Common myeloid progenitor, CD34-positive (primary cell): ENCODE measurements at regions of chr7 and their contacts with region 1.

Region 1: GRCh38 chr7:30800785-30801252 is 29.6 kb downstream of the MINDY4 start:
- DNase-seq: peak; percentile 48 to 80 (median 75)
- H3K4me3 ChIP-seq: no peak overlapping the region
- H3K27ac ChIP-seq: no peak overlapping the region
- H3K4me1 ChIP-seq: peaks cover 0 to 13% (median 7%) of the 10 kb centered on the region in 4 experiments
- H3K27me3 ChIP-seq: no peaks in the 10 kb centered on the region

Region 2: GRCh38 chr7:30977896-30978564 is 177.2 kb after region 1 on chr7:
- CTCF ChIA-PET with region 1: interaction called, 16 read pairs
- POLR2A ChIA-PET with region 1: no interaction called
- DNase-seq: peak; percentile 32 to 50 (median 40)
- H3K4me3 ChIP-seq: no peak overlapping the region
- H3K27ac ChIP-seq: no peak overlapping the region
- H3K4me1 ChIP-seq: peaks cover 0 to 8% (median 2%) of the 10 kb centered on the region in 4 experiments
- H3K27me3 ChIP-seq: peaks cover 0 to 17% (median 6%) of the 10 kb centered on the region in 5 experiments

Region 3: GRCh38 chr7:30983042-30983913 is 182.5 kb after region 1 on chr7:
- CTCF ChIA-PET with region 1: interaction called, 16 read pairs
- POLR2A ChIA-PET with region 1: no interaction called
- DNase-seq: peak; percentile 65 to 86 (median 77)
- H3K4me3 ChIP-seq: no peak overlapping the region
- H3K27ac ChIP-seq: no peak overlapping the region
- H3K4me1 ChIP-seq: peaks cover 0 to 7% (median 2%) of the 10 kb centered on the region in 4 experiments
- H3K27me3 ChIP-seq: peaks cover 0 to 60% (median 19%) of the 10 kb centered on the region in 5 experiments